HCT116 (cell line): ENCODE measurements at regions of chr9 and their contacts with region 1.

Region 1: GRCh38 chr9:75071530-75072124 is 16.3 kb downstream of the NMRK1 start:
- DNase-seq: peak; percentile 44
- ATAC-seq: peak; percentile 96
- H3K4me3 ChIP-seq: no peak overlapping the region
- H3K27ac ChIP-seq: no peak overlapping the region
- H3K4me1 ChIP-seq: peaks cover 4 to 11% of the 10 kb centered on the region in 2 experiments; a peak in 3 of 4 replicates
- H3K27me3 ChIP-seq: no peaks in the 10 kb centered on the region
- CTCF ChIP-seq: no peak
- POLR2A ChIP-seq: no peak
- RAD21 ChIP-seq: no peak

Region 2: DNA sequence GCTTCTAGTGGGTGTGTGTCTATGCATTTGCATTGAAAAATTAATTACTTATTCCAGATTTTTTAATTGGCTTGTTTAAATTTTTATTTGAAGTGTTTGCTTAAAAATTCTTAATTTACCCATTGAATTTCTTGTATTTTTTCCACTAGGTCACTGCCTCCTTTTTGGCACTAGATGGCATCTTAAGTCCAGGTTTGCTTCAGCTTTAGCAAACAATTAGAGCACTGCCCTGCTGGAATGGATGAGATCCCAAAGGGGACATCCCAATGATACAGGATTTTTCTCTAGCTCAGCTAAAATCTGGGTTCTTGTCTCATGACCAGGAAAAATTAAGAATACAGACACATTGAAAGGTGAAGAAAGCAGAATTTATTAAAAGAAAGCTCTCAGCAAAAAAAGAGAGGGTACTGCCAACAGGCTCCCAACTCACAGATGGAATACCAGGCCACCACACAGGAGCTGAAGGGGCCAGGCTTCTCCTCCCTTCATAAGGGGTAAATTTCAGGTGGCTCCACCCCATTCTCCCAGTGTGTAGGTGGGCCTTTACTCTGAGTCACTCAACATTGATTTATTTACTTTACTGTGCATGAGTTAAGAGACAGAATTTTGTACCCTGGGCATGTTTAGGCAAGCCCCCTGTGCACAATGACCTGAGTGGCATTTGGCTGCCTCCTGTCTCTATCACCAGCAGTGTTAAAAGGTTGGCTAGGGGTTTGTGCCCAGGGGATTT is 1387.6 kb before region 1 on chr9:
- CTCF ChIA-PET with region 1: no interaction called
- POLR2A ChIA-PET with region 1: no interaction called
- RAD21 ChIA-PET with region 1: no interaction called
- intact Hi-C with region 1: loop called (anchors 5 kb)
- DNase-seq: peak; percentile 19
- ATAC-seq: peak; percentile 63; the same call in 1 of the 2 replicates
- H3K4me3 ChIP-seq: no peak overlapping the region
- H3K27ac ChIP-seq: no peak overlapping the region
- H3K4me1 ChIP-seq: no peaks in the 10 kb centered on the region
- H3K27me3 ChIP-seq: no peaks in the 10 kb centered on the region
- CTCF ChIP-seq: peak; percentile 24 to 58 (median 42); a peak in 4 of 6 replicates
- POLR2A ChIP-seq: no peak
- RAD21 ChIP-seq: peak; percentile 68

Region 3: DNA sequence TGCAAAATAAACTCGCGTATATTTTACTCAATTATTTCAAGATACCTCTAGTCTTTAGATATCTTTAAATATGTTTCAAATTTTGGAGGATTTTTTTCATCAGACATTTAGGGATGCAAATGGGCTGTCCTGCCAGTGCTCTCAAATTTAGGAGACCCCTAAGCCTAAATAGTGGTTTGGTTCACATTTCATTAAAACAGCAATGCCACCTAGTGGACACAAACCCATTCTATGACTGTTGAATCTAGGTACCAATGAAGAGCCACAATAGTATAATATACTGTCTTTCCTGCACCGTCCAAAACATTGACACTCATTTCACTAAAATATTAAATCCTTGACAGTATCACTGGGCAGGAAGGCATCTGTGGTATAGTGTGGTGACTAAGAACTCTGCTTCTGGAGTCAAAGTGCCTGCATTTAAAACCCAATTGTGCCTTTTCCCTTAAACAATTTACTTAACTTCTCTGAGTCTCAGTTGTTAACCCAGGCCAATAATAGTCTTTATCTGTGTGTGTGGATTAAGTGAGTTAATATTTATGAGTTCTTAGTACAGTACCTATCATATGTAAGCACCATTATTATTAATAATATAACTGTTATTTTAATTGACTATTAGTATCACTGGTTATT is 426.5 kb before region 1 on chr9:
- CTCF ChIA-PET with region 1: no interaction called
- POLR2A ChIA-PET with region 1: no interaction called
- RAD21 ChIA-PET with region 1: no interaction called
- intact Hi-C with region 1: loop called (anchors 10 kb)
- DNase-seq: peak; percentile 7
- ATAC-seq: peak; percentile 77
- H3K4me3 ChIP-seq: no peak overlapping the region
- H3K27ac ChIP-seq: no peak overlapping the region
- H3K4me1 ChIP-seq: no peaks in the 10 kb centered on the region
- H3K27me3 ChIP-seq: peaks cover 60% of the 10 kb centered on the region
- CTCF ChIP-seq: peak; percentile 29 to 74 (median 62); a peak in 5 of 6 replicates
- POLR2A ChIP-seq: no peak
- RAD21 ChIP-seq: peak; percentile 44

Region 4: GRCh38 chr9:75001719-75002422 is 69.8 kb before region 1 on chr9:
- CTCF ChIA-PET with region 1: no interaction called
- POLR2A ChIA-PET with region 1: no interaction called
- RAD21 ChIA-PET with region 1: no interaction called
- intact Hi-C with region 1: loop called (anchors 5 kb)
- DNase-seq: peak; percentile 74
- ATAC-seq: peak; percentile 95
- H3K4me3 ChIP-seq: no peak overlapping the region
- H3K27ac ChIP-seq: no peak overlapping the region
- H3K4me1 ChIP-seq: no peaks in the 10 kb centered on the region
- H3K27me3 ChIP-seq: no peaks in the 10 kb centered on the region
- CTCF ChIP-seq: peak; percentile 65 to 81 (median 67)
- POLR2A ChIP-seq: no peak
- RAD21 ChIP-seq: peak; percentile 74

Region 5: GRCh38 chr9:75027187-75028107 is 44.2 kb before region 1 on chr9:
- CTCF ChIA-PET with region 1: interaction called, 5 read pairs
- POLR2A ChIA-PET with region 1: interaction called, 10 read pairs
- RAD21 ChIA-PET with region 1: no interaction called
- intact Hi-C with region 1: no loop called
- DNase-seq: peak; percentile 2
- ATAC-seq: peak; percentile 60
- H3K4me3 ChIP-seq: peak overlapping the region; percentile 82 to 89
- H3K27ac ChIP-seq: peak overlapping the region; percentile 96
- H3K4me1 ChIP-seq: peaks cover 3 to 19% of the 10 kb centered on the region in 2 experiments; a peak in 3 of 4 replicates
- H3K27me3 ChIP-seq: no peaks in the 10 kb centered on the region
- CTCF ChIP-seq: 0 out of 6 replicates have a peak, but pooled peaks of 1 of the 3 experiments have one; percentile 9
- POLR2A ChIP-seq: no peak
- RAD21 ChIP-seq: no peak

Region 6: DNA sequence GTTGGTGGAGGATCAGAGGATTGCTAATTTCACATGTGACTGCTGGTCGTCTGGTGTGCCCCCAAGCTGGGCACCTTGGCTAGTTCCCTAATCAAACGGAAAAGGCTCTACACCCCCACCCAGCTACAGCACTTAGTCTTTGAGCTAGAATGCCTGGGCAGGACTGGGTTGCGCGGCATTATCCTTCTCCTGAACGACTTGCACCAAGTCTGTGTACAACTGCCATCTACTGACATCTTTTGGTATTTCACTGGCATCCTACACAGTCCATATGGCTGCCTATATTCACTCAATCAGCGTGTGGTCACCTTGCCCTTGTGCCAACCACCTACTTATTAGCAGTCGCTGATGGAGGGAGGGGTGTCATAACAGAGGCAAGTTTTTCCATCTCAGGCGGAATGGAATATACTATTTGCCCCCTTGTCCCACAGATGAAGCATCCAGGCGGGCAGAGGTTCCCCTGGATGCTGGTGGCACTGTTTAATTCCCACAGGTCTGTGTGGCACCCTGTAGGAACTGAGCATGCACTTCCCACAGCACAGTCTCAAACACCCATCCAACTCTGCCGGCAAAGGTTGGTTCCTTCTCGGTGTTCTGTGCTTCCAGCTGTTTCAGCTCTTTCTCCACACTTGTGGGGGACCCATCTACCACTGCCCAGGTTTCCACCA is 166.8 kb after region 1 on chr9:
- CTCF ChIA-PET with region 1: no interaction called
- POLR2A ChIA-PET with region 1: no interaction called
- RAD21 ChIA-PET with region 1: no interaction called
- intact Hi-C with region 1: no loop called
- DNase-seq: peak; percentile 62
- ATAC-seq: peak; percentile 99
- H3K4me3 ChIP-seq: no peak overlapping the region
- H3K27ac ChIP-seq: no peak overlapping the region
- H3K4me1 ChIP-seq: no peaks in the 10 kb centered on the region
- H3K27me3 ChIP-seq: no peaks in the 10 kb centered on the region
- CTCF ChIP-seq: peak; percentile 53 to 68 (median 66); a peak in 5 of 6 replicates
- POLR2A ChIP-seq: no peak
- RAD21 ChIP-seq: peak; percentile 70